ENCODE measurements at regions of chr16 and their contacts with region 1.

Region 1: GRCh38 chr16:660459-661183 is 7.3 kb upstream of the RHOT2 start:
- DNase-seq: peak; percentile 96
- H3K4me3 ChIP-seq: peak overlapping the region in 3 of 4 donors; percentile 24 to 39 (median 38)
- H3K27ac ChIP-seq: peak overlapping the region; percentile 75 to 87 (median 84)
- H3K4me1 ChIP-seq: peaks cover 0 to 19% (median 14%) of the 10 kb centered on the region in 4 donors
- H3K27me3 ChIP-seq: no peaks in the 10 kb centered on the region
- CTCF ChIP-seq: peak; percentile 47 to 74 (median 63)
- EP300 ChIP-seq: no peak
- POLR2A ChIP-seq: no peak

Region 2: GRCh38 chr16:370443-370842 is 290.2 kb before region 1 on chr16 and contains the start of gene MRPL28:
- intact Hi-C with region 1: no loop called
- DNase-seq: peak; percentile 98
- H3K4me3 ChIP-seq: peak within 1 kb of the TSS; percentile 44 to 59 (median 55)
- H3K27ac ChIP-seq: peak within 1 kb of the TSS; percentile 76 to 79 (median 76)
- H3K4me1 ChIP-seq: peaks cover 3 to 20% (median 18%) of the 10 kb centered on the region in 4 donors
- H3K27me3 ChIP-seq: no peaks in the 10 kb centered on the region
- CTCF ChIP-seq: no peak
- EP300 ChIP-seq: no peak
- POLR2A ChIP-seq: no peak
- total RNA-seq, gene MRPL28: 49.6 to 77.4 (median 62.0) TPM

Region 3: DNA sequence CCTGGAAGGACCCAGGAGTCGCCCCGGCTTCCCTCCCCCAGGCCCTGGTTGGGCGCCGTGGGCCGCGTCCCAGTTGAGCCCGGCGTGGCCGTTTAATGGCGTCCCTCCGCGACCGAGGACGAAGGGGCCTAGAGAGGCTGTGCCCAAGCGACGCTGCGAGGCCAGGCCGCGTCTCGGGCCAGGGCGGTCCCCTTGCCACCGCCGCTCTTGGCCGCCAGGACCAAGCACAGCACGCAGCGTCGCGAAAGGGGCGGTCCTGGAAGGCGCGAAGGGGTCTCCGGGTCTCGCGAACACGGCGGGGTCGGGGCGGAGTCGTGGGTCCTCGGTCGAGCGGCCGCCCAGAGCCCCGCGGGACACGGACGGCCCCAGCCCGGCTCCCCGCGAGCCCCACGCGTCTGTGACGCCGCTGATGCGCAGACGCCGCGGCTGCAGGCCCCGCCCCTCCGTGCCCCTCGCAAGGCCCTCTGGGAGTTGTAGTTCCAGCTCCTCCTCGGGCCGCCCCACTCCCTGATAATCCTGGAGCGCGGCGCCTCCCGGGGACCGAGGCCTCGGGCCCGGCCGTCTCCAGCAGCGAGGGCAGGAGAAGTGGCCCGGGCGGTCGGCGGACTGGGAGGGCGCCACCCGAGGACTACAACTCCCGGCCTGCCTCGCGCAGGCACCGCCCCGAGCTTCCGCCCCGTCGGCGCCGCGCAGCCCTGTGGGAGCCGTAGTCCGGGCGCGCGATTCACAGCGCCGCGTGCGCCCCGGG is 133.4 kb before region 1 on chr16 and contains the start of gene CAPN15:
- intact Hi-C with region 1: loop called (anchors 5 kb)
- DNase-seq: peak; percentile 94
- H3K4me3 ChIP-seq: peak within 1 kb of the TSS; percentile 57 to 65 (median 62)
- H3K27ac ChIP-seq: peak within 1 kb of the TSS; percentile 86 to 96 (median 94)
- H3K4me1 ChIP-seq: peaks cover 0 to 55% (median 41%) of the 10 kb centered on the region in 4 donors
- H3K27me3 ChIP-seq: no peaks in the 10 kb centered on the region
- CTCF ChIP-seq: peak; percentile 9 to 37 (median 26)
- EP300 ChIP-seq: no peak
- POLR2A ChIP-seq: peak; percentile 48 to 59
- total RNA-seq, gene CAPN15: 10.3 to 24.4 (median 16.9) TPM

Region 4: GRCh38 chr16:641302-642188 is 19.1 kb before region 1 on chr16 and contains the start of gene MCRIP2:
- intact Hi-C with region 1: loop called (anchors 1 kb)
- DNase-seq: peak; percentile 91
- H3K4me3 ChIP-seq: peak within 1 kb of the TSS; percentile 49 to 93 (median 84)
- H3K27ac ChIP-seq: peak within 1 kb of the TSS; percentile 81 to 91 (median 90)
- H3K4me1 ChIP-seq: peaks cover 0 to 38% (median 31%) of the 10 kb centered on the region in 4 donors
- H3K27me3 ChIP-seq: no peaks in the 10 kb centered on the region
- CTCF ChIP-seq: no peak
- EP300 ChIP-seq: no peak
- POLR2A ChIP-seq: peak; percentile 41 to 65
- total RNA-seq, gene MCRIP2: 52.1 to 63.4 (median 55.6) TPM

Region 5: GRCh38 chr16:799948-800833 is 139.6 kb after region 1 on chr16 and contains the start of gene GNG13:
- intact Hi-C with region 1: no loop called
- DNase-seq: no peak
- H3K4me3 ChIP-seq: no peak within 1 kb of the TSS
- H3K27ac ChIP-seq: no peak within 1 kb of the TSS
- H3K4me1 ChIP-seq: no peaks in the 10 kb centered on the region
- H3K27me3 ChIP-seq: peaks cover 19 to 83% (median 57%) of the 10 kb centered on the region in 3 donors
- CTCF ChIP-seq: no peak
- EP300 ChIP-seq: no peak
- POLR2A ChIP-seq: no peak
- total RNA-seq, gene GNG13: not detected

Measured in sigmoid colon (tissue), 7 donors.